PC-9 (cell line): ENCODE measurements at regions of chr19 and their contacts with region 1.

Region 1: GRCh38 chr19:54430306-54431254 is 15.3 kb downstream of the TTYH1 start:
- DNase-seq: peak; percentile 81 to 85
- H3K4me3 ChIP-seq: peak overlapping the region; percentile 59
- H3K27ac ChIP-seq: peak overlapping the region; percentile 99
- H3K4me1 ChIP-seq: peaks cover 58% of the 10 kb centered on the region
- H3K27me3 ChIP-seq: no peaks in the 10 kb centered on the region
- CTCF ChIP-seq: peak; percentile 64

Region 2: GRCh38 chr19:54029930-54030490 is 400.6 kb before region 1 on chr19:
- CTCF ChIA-PET with region 1: no interaction called
- POLR2A ChIA-PET with region 1: interaction called, 20 read pairs
- intact Hi-C with region 1: no loop called
- DNase-seq: peak; percentile 65 to 68
- H3K4me3 ChIP-seq: no peak overlapping the region
- H3K27ac ChIP-seq: no peak overlapping the region
- H3K4me1 ChIP-seq: peaks cover 15% of the 10 kb centered on the region
- H3K27me3 ChIP-seq: no peaks in the 10 kb centered on the region
- CTCF ChIP-seq: peak; percentile 87

Region 3: GRCh38 chr19:54357381-54357780 is 73.2 kb before region 1 on chr19:
- CTCF ChIA-PET with region 1: interaction called, 11 read pairs
- POLR2A ChIA-PET with region 1: no interaction called
- intact Hi-C with region 1: no loop called
- DNase-seq: no peak
- H3K4me3 ChIP-seq: no peak overlapping the region
- H3K27ac ChIP-seq: no peak overlapping the region
- H3K4me1 ChIP-seq: no peaks in the 10 kb centered on the region
- H3K27me3 ChIP-seq: peaks cover 58% of the 10 kb centered on the region
- CTCF ChIP-seq: no peak

Region 4: DNA sequence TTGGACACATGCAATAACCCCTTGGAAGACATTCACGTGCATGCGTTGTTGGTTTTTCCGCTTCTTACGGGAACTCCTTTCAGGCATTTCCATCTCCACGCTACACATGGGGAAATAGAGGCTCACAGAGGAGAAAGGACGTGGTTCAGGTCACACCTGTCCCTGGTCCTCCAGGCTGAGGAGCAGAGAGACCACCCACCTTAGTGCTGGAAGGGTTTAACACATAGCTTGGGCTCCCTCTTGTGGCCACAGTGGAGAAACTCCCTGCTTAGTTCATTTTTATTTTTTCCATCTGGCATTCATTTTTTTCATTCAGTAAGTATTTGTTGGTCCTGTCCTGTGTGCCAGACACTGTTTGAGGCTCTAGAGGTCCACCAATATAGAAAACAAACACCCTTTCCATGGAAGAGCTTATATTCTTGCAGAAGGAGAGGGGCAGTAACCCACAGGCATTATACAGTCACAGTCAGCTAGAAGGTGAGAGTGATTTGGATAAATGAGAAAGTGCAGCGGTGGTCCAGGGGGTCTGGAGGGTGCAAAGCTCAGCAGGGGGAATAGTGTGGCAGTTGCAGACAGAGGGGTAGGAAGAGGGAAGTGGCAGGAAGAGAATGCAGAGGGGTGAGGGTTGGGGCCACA is 39.5 kb before region 1 on chr19:
- CTCF ChIA-PET with region 1: no interaction called
- POLR2A ChIA-PET with region 1: interaction called, 3 read pairs
- intact Hi-C with region 1: loop called (anchors 2 kb)
- DNase-seq: peak; percentile 50
- H3K4me3 ChIP-seq: no peak overlapping the region
- H3K27ac ChIP-seq: no peak overlapping the region
- H3K4me1 ChIP-seq: no peaks in the 10 kb centered on the region
- H3K27me3 ChIP-seq: peaks cover 59% of the 10 kb centered on the region
- CTCF ChIP-seq: peak; percentile 96

Region 5: GRCh38 chr19:54448774-54449700 is 18.5 kb after region 1 on chr19 and contains the start of gene LENG8:
- CTCF ChIA-PET with region 1: interaction called, 9 read pairs
- POLR2A ChIA-PET with region 1: interaction called, 19 read pairs
- intact Hi-C with region 1: loop called (anchors 1 kb)
- DNase-seq: peak; percentile 94 to 98
- H3K4me3 ChIP-seq: peak within 1 kb of the TSS; percentile 96
- H3K27ac ChIP-seq: peak within 1 kb of the TSS; percentile 65
- H3K4me1 ChIP-seq: peaks cover 25% of the 10 kb centered on the region
- H3K27me3 ChIP-seq: no peaks in the 10 kb centered on the region
- CTCF ChIP-seq: no peak
- total RNA-seq, gene LENG8: 274 and 279 TPM in 2 replicates

Region 6: GRCh38 chr19:54517483-54517882 is 86.9 kb after region 1 on chr19:
- CTCF ChIA-PET with region 1: no interaction called
- POLR2A ChIA-PET with region 1: no interaction called
- intact Hi-C with region 1: no loop called
- DNase-seq: peak; percentile 50 to 56
- H3K4me3 ChIP-seq: no peak overlapping the region
- H3K27ac ChIP-seq: no peak overlapping the region
- H3K4me1 ChIP-seq: no peaks in the 10 kb centered on the region
- H3K27me3 ChIP-seq: peaks cover 72% of the 10 kb centered on the region
- CTCF ChIP-seq: no peak

Region 7: GRCh38 chr19:54952591-54953344 is 522.2 kb after region 1 on chr19:
- CTCF ChIA-PET with region 1: no interaction called
- POLR2A ChIA-PET with region 1: interaction called, 10 read pairs
- intact Hi-C with region 1: no loop called
- DNase-seq: peak; percentile 90 to 99
- H3K4me3 ChIP-seq: peak overlapping the region; percentile 17; the same call in 1 of the 2 replicates
- H3K27ac ChIP-seq: peak overlapping the region; percentile 88
- H3K4me1 ChIP-seq: peaks cover 24% of the 10 kb centered on the region
- H3K27me3 ChIP-seq: no peaks in the 10 kb centered on the region
- CTCF ChIP-seq: no peak

Region 8: DNA sequence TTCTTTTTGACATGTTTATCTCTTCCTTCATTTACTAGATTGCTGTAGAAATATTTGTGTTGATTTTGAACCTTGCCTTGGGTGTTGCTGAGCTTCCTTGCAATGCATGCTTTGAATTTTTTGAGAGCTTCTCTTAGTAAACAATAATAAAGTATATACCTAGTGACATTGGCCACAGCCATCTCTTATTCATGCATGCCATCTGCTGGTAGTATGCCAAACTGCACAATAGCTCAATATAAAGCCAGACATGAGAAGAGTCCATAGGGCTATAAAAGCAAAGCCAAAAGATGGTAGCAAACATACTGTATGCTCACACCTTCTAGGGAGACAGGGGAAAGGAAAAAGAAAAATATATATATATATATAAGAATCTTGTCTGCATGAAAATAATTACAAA is 1902.9 kb after region 1 on chr19:
- CTCF ChIA-PET with region 1: no interaction called
- POLR2A ChIA-PET with region 1: interaction called, 15 read pairs
- intact Hi-C with region 1: no loop called
- DNase-seq: peak; percentile 61 to 66
- H3K4me3 ChIP-seq: no peak overlapping the region
- H3K27ac ChIP-seq: no peak overlapping the region
- H3K4me1 ChIP-seq: no peaks in the 10 kb centered on the region
- H3K27me3 ChIP-seq: peaks cover 41% of the 10 kb centered on the region
- CTCF ChIP-seq: peak; percentile 95